ENCODE measurements at regions of chr21 and their contacts with region 1.

Region 1: GRCh38 chr21:43789276-43790009 is at the start of gene RRP1:
- DNase-seq: peak; percentile 99
- ATAC-seq: peak; percentile 95
- H3K4me3 Mint-ChIP-seq: peak within 1 kb of the TSS; percentile 92
- H3K27ac Mint-ChIP-seq: peak within 1 kb of the TSS; percentile 91
- H3K4me1 Mint-ChIP-seq: peaks cover 19% of the 10 kb centered on the region
- H3K27me3 Mint-ChIP-seq: no peaks in the 10 kb centered on the region
- CTCF ChIP-seq: peak; percentile 53
- total RNA-seq, gene RRP1: 36.8 and 37.0 TPM in 2 replicates

Region 2: DNA sequence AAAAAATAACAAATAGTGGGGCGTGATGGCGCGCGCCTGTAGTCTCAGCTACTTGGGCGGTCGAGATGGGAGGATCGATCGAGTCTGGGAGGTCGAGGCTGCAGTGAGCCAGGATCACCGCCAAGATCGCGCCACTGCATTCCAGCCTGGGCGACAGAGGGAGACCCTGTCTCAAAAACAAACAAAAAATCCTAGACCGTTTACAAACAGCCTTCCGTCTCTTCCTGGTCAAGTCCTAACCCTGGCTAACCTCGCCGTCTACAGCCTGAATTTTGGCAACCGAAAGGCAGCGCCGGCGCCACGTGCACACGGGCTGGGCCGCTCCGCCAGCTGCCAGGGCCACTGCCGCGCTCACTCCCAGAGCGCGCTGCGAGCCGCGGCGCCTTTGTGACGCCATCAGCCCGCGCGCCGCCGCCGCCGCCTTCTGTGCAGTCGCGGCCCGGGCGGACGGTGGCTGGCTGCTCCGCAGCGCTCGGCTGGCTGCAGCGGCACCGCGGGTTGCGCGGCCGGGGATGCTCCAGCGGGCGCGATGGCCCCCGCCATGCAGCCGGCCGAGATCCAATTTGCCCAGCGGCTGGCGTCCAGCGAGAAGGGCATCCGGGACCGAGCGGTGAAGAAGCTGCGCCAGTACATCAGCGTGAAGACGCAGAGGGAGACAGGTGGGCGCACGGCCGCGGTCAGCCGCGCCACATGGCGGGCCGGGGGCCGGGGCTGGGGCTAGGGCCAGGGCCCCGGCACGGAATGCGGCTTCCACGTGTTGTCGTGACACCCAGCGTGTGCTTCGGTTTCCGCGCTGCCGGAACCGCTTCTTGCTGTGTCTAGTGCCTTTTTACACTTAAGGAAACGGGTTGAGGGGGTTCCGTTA is 130.1 kb before region 1 on chr21 and contains the starts of genes HSF2BP and RRP1B:
- CTCF ChIA-PET with region 1: no interaction called
- POLR2A ChIA-PET with region 1: no interaction called
- intact Hi-C with region 1: loop called (anchors 1 kb)
- DNase-seq: peak; percentile 85
- ATAC-seq: peak; percentile 90
- H3K4me3 Mint-ChIP-seq: peak within 1 kb of the TSS; percentile 93
- H3K27ac Mint-ChIP-seq: peak within 1 kb of the TSS; percentile 87
- H3K4me1 Mint-ChIP-seq: peaks cover 30% of the 10 kb centered on the region
- H3K27me3 Mint-ChIP-seq: peaks cover 3% of the 10 kb centered on the region
- CTCF ChIP-seq: no peak
- total RNA-seq, gene HSF2BP: 0.58 and 0.61 TPM in 2 replicates
- total RNA-seq, gene RRP1B: 29.6 and 32.0 TPM in 2 replicates

Region 3: DNA sequence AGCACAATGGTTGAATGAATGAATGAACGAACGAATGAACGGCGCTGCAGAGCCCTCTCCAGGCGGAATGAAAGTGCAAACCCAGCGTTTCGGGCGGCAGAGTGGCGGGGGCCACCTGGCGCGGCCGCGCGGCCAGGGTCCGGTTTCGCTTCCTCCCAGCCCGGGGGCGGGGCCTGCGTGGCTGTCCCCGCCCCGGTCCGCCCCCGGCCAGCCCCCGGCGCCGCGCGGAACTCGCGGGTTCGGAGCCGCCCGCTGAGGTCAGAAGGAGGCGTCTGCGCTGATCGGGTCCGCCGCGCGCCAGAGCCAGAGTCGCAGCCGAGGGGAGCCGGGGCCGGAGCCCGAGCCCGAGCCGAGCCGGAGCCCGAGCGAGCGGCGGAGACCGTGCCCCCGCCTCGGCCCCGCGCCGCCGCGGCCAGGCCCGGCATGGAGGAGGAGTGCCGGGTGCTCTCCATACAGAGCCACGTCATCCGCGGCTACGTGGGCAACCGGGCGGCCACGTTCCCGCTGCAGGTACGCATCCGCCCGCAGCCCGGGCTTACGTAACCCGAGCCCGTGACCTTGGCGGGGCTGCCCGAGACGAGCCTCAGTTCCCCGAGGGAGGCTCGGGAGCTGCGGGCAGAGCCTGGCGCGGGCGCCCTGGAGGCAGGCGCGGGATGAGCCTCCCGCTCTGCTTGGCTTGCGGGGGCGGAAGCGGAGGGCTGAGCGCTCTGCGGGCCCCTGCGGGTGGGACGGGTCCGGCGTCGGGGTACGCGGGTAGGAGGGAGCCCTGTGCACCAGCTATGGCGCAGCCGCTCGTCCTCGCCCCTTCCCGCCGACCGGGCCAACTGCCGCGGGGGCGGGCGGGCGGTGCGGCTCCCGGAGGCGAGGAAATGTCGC is 70.3 kb before region 1 on chr21 and contains the start of gene PDXK:
- CTCF ChIA-PET with region 1: no interaction called
- POLR2A ChIA-PET with region 1: interaction called, 3 read pairs
- intact Hi-C with region 1: loop called (anchors 1 kb)
- DNase-seq: peak; percentile 93
- ATAC-seq: peak; percentile 80
- H3K4me3 Mint-ChIP-seq: peak within 1 kb of the TSS; percentile 81
- H3K27ac Mint-ChIP-seq: peak within 1 kb of the TSS; percentile 71
- H3K4me1 Mint-ChIP-seq: peaks cover 58% of the 10 kb centered on the region
- H3K27me3 Mint-ChIP-seq: no peaks in the 10 kb centered on the region
- CTCF ChIP-seq: no peak
- total RNA-seq, gene PDXK: 45.2 and 54.2 TPM in 2 replicates

Region 4: DNA sequence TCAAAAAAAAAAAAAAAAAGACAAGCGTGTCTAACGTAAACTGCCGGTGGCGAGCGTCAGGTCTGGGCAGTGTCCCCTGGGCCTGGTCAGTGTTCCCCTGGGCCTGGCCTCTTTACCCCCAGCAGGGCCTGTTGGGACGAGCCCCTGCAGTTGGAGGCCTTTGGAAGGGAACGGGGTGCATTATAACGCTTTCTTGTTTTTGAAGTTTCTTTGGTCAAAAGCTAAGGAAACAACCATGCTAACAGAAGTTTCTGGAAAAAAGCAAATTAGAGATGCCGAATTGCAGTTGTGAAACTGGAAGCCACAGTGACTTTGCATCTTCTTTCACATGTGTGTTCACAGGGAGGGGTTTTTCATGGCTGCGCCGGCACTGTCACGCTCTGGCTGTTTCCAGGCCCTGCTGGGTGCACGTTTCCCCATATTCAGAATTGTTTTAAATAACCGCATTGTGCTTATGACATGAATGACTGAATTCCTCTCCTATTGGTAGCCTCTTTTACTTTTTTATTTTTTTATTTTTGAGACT is 15.9 kb after region 1 on chr21:
- CTCF ChIA-PET with region 1: no interaction called
- POLR2A ChIA-PET with region 1: interaction called, 16 read pairs
- intact Hi-C with region 1: loop called (anchors 1 kb)
- DNase-seq: peak; percentile 69
- ATAC-seq: peak; percentile 97
- H3K4me3 Mint-ChIP-seq: peak overlapping the region; percentile 78
- H3K27ac Mint-ChIP-seq: peak overlapping the region; percentile 95
- H3K4me1 Mint-ChIP-seq: peaks cover 37% of the 10 kb centered on the region
- H3K27me3 Mint-ChIP-seq: peaks cover 2% of the 10 kb centered on the region
- CTCF ChIP-seq: no peak

Region 5: DNA sequence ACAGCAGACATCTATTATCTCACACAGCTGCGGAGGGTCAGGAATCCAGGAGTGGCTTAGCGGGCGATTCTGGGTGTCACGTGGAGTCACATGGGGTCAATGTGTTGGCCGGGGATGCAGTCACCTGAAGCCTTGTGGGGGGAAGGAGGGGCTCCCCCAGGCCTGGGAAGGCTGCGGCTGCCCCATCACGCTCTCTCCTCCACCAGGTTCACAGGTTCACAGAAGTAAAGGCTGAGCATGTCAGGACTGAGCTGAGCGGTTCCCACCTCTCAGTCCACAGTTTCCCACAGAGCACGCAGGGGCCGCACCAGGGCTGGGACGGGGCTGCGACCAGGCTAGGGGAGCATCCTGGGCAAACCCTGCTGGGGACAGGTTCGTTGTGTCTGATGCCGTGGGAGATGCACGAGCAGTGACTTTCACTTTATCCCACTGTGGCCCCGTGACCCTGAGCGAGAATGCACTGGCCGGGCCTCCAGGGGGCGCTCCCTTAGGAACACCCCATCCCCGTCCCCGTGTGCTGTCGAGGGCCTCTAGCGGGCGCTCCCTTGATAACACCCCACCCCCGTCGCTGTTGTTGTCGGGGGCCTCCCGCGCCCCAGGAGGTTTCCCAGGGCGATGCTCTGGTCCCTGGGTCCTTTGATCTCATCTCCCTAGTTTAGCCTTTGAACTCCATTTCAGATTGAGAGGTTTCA is 149.5 kb after region 1 on chr21:
- CTCF ChIA-PET with region 1: interaction called, 3 read pairs
- POLR2A ChIA-PET with region 1: no interaction called
- intact Hi-C with region 1: loop called (anchors 1 kb)
- DNase-seq: peak; percentile 82
- ATAC-seq: peak; percentile 97
- H3K4me3 Mint-ChIP-seq: peak overlapping the region; percentile 92
- H3K27ac Mint-ChIP-seq: peak overlapping the region; percentile 74
- H3K4me1 Mint-ChIP-seq: peaks cover 22% of the 10 kb centered on the region
- H3K27me3 Mint-ChIP-seq: no peaks in the 10 kb centered on the region
- CTCF ChIP-seq: peak; percentile 47